ENCODE measurements at regions of chr3 and their contacts with region 1.

Region 1: DNA sequence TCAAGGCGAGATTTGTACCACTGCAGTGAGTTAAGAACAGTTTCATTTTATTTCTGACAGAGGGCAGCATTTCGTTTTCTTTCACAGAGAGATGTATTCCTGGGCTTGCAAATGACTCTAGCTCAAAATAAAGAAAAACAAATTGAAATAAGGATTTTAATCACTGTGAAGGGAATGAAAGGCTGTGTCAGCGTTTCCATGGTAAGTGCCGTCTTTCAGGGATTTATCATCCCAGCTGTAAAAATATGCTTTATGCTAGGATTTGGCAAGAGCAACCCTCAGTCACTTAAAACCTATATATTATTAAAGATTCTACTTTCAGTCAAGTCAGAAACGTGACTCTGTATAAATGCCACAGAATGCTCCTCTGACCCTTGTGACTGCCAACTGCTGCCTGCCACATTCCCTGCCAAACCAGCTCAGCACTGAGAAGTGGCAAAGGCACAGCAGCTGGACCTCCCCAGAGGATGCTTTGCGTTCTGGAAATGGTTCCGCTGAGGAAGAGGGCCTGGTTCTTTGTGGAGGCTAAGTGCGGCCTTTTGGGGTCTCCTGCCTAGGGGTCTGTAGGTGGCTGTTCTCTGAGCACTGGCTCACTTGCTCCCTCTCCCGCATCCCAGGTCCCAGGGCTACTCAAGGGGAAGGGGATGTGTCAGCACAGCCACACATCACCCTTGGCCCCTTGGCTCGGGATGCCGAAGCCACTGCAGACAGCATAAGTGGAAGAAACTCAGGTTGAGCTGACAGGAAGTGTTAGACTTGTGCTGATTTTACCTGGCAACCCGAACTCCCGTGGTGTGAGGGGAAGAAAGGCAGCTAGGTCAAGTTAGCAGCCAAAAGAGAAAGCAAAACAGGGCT is 56.6 kb upstream of the POMGNT2 start:
- DNase-seq: no peak
- H3K4me3 ChIP-seq: no peak overlapping the region
- H3K27ac ChIP-seq: no peak overlapping the region
- H3K4me1 ChIP-seq: peaks cover 0 to 4% of the 10 kb centered on the region in 2 donors
- H3K27me3 ChIP-seq: no peaks in the 10 kb centered on the region
- CTCF ChIP-seq: peak in 2 of 3 experiments; percentile 9 to 41

Region 2: DNA sequence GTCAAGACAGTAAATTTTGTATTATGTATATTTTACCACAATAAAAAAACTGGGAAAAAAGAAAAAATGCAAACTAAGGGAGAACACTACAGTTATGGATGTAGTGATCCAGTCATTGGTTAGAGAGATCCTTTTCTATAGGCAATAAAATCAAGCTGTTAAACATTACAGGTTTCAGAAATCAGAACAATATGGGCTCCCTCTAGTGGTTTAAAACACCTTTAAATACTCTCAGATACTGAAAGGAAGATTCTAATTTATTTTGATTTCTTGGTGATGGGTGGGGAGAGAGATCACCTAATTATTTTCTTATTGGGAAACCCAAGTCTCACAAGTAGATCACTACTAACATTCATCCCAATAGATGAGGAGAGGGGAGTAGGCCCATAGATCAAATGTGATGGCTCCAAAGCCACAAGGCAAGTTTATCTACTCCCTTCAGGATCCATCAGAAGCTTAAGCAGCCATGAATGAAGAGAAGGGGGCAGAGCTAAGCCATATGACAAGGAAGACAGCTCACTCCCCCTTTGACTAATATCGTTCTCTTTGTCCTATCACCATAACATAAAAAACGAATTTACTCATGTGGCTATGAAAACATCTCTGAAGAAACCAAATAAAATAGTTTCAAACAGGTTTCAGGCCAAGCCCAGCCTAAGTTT is 340.7 kb after region 1 on chr3:
- intact Hi-C with region 1: loop called (anchors 5 kb)
- DNase-seq: no peak
- H3K4me3 ChIP-seq: no peak overlapping the region
- H3K27ac ChIP-seq: no peak overlapping the region
- H3K4me1 ChIP-seq: no peaks in the 10 kb centered on the region
- H3K27me3 ChIP-seq: no peaks in the 10 kb centered on the region
- CTCF ChIP-seq: peak; percentile 32 to 52 (median 34)

Measured in ascending aorta (tissue), 2 donors.